BJ (cell line): ENCODE measurements at regions of chr9 and their contacts with region 1.

Region 1: GRCh38 chr9:124940693-124941453 is at the start of gene GOLGA1:
- DNase-seq: peak; percentile 66
- H3K4me3 ChIP-seq: peak within 1 kb of the TSS; percentile 56
- H3K27me3 ChIP-seq: no peaks in the 10 kb centered on the region
- CTCF ChIP-seq: no peak
- polyA plus RNA-seq, gene GOLGA1: 10.8 and 12.4 TPM in 2 replicates

Region 2: DNA sequence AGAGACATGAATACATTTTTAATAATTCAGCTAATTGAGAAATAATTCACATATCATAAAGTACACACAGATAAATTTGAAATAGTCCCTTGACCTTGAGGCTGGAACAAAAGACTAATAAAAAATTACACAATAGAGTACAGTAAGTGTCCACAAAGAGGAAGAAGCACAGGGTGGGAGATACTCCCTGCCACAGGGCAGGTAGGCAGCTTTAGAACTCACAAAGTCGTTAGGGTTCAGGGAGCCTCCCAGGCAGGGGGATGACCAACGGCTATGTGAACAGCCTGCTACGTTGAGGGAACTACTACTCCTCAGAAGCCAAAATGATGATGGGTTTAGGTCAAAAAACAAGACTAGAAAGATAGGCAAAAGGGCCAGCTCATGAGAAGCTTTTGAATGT is 32.3 kb before region 1 on chr9:
- CTCF ChIA-PET with region 1: interaction called, 3 read pairs
- POLR2A ChIA-PET with region 1: interaction called, 21 read pairs
- DNase-seq: no peak
- H3K4me3 ChIP-seq: no peak overlapping the region
- H3K27me3 ChIP-seq: no peaks in the 10 kb centered on the region
- CTCF ChIP-seq: no peak